CD4-positive, alpha-beta memory T cell (primary cell): ENCODE measurements at regions of chr16 and their contacts with region 1.

Region 1: GRCh38 chr16:58129097-58129936 is at the start of gene CFAP20:
- DNase-seq: peak; percentile 96 to 97 (median 97)
- H3K4me3 ChIP-seq: peak within 1 kb of the TSS; percentile 64 to 96
- H3K4me3 Mint-ChIP-seq: peak within 1 kb of the TSS; percentile 91 to 96 (median 94)
- H3K27ac ChIP-seq: peak within 1 kb of the TSS; percentile 82
- H3K27ac Mint-ChIP-seq: peak within 1 kb of the TSS; percentile 93 to 98 (median 97)
- H3K4me1 ChIP-seq: peaks cover 39% of the 10 kb centered on the region
- H3K4me1 Mint-ChIP-seq: peaks cover 37 to 51% (median 42%) of the 10 kb centered on the region in 4 donors
- H3K27me3 ChIP-seq: no peaks in the 10 kb centered on the region
- H3K27me3 Mint-ChIP-seq: no peaks in the 10 kb centered on the region
- total RNA-seq, gene CFAP20: 25.4 to 26.3 TPM

Region 2: DNA sequence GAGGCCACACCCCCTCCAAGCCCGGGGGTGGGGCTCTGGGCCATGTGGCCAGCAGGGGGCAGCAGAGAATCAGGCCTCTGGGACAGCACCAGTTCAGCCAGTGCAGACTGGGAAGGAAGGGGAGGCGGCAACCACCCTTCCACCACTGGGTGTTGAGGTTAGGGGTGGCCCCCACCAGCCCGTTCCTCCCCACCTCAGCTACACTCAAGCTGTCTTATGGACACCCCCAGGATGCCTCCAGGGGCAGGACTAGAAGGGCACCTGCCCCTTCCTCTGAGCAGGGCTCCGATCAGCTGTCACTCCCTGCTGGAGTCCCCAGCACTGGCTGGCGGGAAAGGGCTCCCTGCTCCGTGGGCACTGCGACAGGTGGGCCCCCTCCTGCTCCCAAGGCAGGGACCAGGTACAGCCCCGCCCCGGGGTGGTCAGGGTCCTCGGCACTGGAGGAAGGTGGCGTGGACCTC is 372.0 kb before region 1 on chr16:
- CTCF ChIA-PET with region 1: no interaction called
- POLR2A ChIA-PET with region 1: no interaction called
- intact Hi-C with region 1: loop called (anchors 5 kb)
- DNase-seq: peak; percentile 80 to 88 (median 81)
- H3K4me3 ChIP-seq: no peak overlapping the region
- H3K4me3 Mint-ChIP-seq: no peak overlapping the region
- H3K27ac ChIP-seq: no peak overlapping the region
- H3K27ac Mint-ChIP-seq: no peak overlapping the region
- H3K4me1 ChIP-seq: no peaks in the 10 kb centered on the region
- H3K4me1 Mint-ChIP-seq: peaks cover 0 to 3% (median 0%) of the 10 kb centered on the region in 4 donors
- H3K27me3 ChIP-seq: no peaks in the 10 kb centered on the region
- H3K27me3 Mint-ChIP-seq: no peaks in the 10 kb centered on the region

Region 3: GRCh38 chr16:57976331-57976796 is 153.0 kb before region 1 on chr16:
- CTCF ChIA-PET with region 1: no interaction called
- POLR2A ChIA-PET with region 1: no interaction called
- intact Hi-C with region 1: no loop called
- DNase-seq: no peak
- H3K4me3 ChIP-seq: no peak overlapping the region
- H3K4me3 Mint-ChIP-seq: no peak overlapping the region
- H3K27ac ChIP-seq: no peak overlapping the region
- H3K27ac Mint-ChIP-seq: no peak overlapping the region
- H3K4me1 ChIP-seq: no peaks in the 10 kb centered on the region
- H3K4me1 Mint-ChIP-seq: no peaks in the 10 kb centered on the region
- H3K27me3 ChIP-seq: no peaks in the 10 kb centered on the region
- H3K27me3 Mint-ChIP-seq: no peaks in the 10 kb centered on the region

Region 4: GRCh38 chr16:58000706-58001676 is 128.3 kb before region 1 on chr16 and contains the start of gene USB1:
- CTCF ChIA-PET with region 1: interaction called, 4 read pairs
- POLR2A ChIA-PET with region 1: interaction called, 7 read pairs
- intact Hi-C with region 1: loop called (anchors 1 kb)
- DNase-seq: peak; percentile 81 to 90 (median 85)
- H3K4me3 ChIP-seq: peak within 1 kb of the TSS; percentile 76 to 93
- H3K4me3 Mint-ChIP-seq: peak within 1 kb of the TSS; percentile 90 to 95 (median 92)
- H3K27ac ChIP-seq: peak within 1 kb of the TSS; percentile 75
- H3K27ac Mint-ChIP-seq: peak within 1 kb of the TSS; percentile 88 to 96 (median 94)
- H3K4me1 ChIP-seq: peaks cover 46% of the 10 kb centered on the region
- H3K4me1 Mint-ChIP-seq: peaks cover 40 to 75% (median 51%) of the 10 kb centered on the region in 4 donors
- H3K27me3 ChIP-seq: no peaks in the 10 kb centered on the region
- H3K27me3 Mint-ChIP-seq: no peaks in the 10 kb centered on the region
- total RNA-seq, gene USB1: 36.4 to 39.5 TPM

Region 5: DNA sequence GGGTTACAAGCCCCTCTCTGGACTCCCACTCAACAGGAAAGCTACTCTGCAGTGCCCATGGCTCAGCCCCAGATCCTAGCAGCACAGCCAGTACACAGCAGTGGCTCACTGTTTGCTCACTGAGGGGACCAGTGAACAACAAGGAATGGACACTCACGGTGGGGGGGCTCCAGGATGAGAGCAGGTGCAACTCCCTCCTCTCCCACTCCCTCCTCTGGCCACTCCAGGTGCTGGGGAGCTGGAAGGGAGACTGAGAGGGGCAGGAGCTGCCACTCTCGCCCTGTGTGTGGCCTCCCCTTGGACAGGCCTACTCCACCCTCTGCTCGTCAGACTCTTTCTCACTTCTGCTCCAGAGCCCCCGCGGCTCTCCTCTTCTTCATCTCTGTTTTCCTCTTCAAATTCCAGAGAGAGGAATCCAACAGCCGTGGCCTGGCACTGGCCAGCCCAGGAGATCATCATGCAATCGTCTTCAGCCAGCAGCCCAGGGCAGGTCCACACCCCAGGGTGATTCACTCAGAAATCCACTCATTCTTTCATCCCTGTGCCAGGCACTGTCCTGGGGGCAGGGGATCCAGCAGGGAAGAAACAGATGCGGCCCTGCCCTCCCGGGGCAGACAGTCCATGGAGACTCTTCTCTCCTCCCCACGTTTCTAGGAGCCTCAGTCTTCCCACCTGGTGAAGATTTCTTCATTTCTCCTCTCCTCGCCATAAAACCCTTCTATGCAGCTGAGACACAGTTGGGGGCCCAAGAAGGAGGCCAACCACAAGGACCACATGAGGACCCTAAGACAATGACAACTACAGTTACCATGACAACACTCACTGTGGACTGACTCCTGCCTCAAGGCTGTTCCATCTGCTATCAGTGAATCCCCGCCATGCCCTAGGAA is 30.9 kb before region 1 on chr16:
- CTCF ChIA-PET with region 1: interaction called, 10 read pairs
- POLR2A ChIA-PET with region 1: interaction called, 5 read pairs
- intact Hi-C with region 1: no loop called
- DNase-seq: no peak
- H3K4me3 ChIP-seq: no peak overlapping the region
- H3K4me3 Mint-ChIP-seq: no peak overlapping the region
- H3K27ac ChIP-seq: no peak overlapping the region
- H3K27ac Mint-ChIP-seq: peak overlapping the region in 1 of 7 donors; percentile 48
- H3K4me1 ChIP-seq: no peaks in the 10 kb centered on the region
- H3K4me1 Mint-ChIP-seq: peaks cover 0 to 6% (median 0%) of the 10 kb centered on the region in 4 donors
- H3K27me3 ChIP-seq: no peaks in the 10 kb centered on the region
- H3K27me3 Mint-ChIP-seq: peaks cover 0 to 2% of the 10 kb centered on the region in 2 donors

Region 6: GRCh38 chr16:58198022-58198683 is 68.8 kb after region 1 on chr16 and contains the start of gene CSNK2A2:
- CTCF ChIA-PET with region 1: interaction called, 5 read pairs
- POLR2A ChIA-PET with region 1: interaction called, 3 read pairs
- intact Hi-C with region 1: loop called (anchors 1 kb)
- DNase-seq: peak; percentile 59 to 67 (median 64)
- H3K4me3 ChIP-seq: peak within 1 kb of the TSS; percentile 40 to 64
- H3K4me3 Mint-ChIP-seq: peak within 1 kb of the TSS; percentile 82 to 93 (median 88)
- H3K27ac ChIP-seq: peak within 1 kb of the TSS; percentile 30
- H3K27ac Mint-ChIP-seq: peak within 1 kb of the TSS; percentile 79 to 88 (median 87)
- H3K4me1 ChIP-seq: peaks cover 43% of the 10 kb centered on the region
- H3K4me1 Mint-ChIP-seq: peaks cover 28 to 49% (median 39%) of the 10 kb centered on the region in 4 donors
- H3K27me3 ChIP-seq: no peaks in the 10 kb centered on the region
- H3K27me3 Mint-ChIP-seq: peaks cover 6 to 11% of the 10 kb centered on the region in 2 donors
- total RNA-seq, gene CSNK2A2: 63.5 to 63.6 TPM

Region 7: DNA sequence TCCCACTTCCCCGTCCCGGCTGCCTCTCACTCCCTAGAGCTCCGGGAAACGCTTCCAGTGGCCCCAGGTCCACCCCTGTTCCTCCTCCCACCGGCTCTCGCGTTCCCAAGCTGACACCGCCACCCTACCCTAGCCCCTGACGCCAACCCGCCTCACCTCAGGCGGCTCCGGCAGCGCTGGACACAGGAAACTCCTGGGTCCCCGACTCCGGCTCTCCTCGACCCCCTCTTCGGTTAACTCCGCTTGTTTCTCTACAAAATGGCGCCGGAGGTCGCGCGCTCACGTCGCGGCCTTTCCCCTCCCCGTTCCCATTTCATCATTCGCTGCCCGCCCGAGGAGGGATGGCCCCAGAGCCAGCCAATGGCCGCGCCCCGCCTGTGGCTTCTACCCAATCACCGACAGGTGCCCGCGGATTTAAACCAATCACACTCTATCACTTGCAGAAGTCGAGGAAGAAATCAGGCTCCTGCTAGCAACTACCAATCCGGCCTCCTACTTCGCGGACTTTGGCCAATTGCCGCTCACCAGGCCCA is 500.3 kb after region 1 on chr16 and contains the start of gene CNOT1:
- CTCF ChIA-PET with region 1: no interaction called
- POLR2A ChIA-PET with region 1: no interaction called
- intact Hi-C with region 1: loop called (anchors 1 kb)
- DNase-seq: peak; percentile 99
- H3K4me3 ChIP-seq: peak within 1 kb of the TSS; percentile 89 to 99
- H3K4me3 Mint-ChIP-seq: peak within 1 kb of the TSS; percentile 97 to 100 (median 100)
- H3K27ac ChIP-seq: peak within 1 kb of the TSS; percentile 100
- H3K27ac Mint-ChIP-seq: peak within 1 kb of the TSS; percentile 99 to 100 (median 100)
- H3K4me1 ChIP-seq: peaks cover 33% of the 10 kb centered on the region
- H3K4me1 Mint-ChIP-seq: peaks cover 14 to 46% (median 29%) of the 10 kb centered on the region in 4 donors
- H3K27me3 ChIP-seq: no peaks in the 10 kb centered on the region
- H3K27me3 Mint-ChIP-seq: no peaks in the 10 kb centered on the region
- total RNA-seq, gene CNOT1: 251 to 262 TPM